ENCODE measurements at regions of chr10 and their contacts with region 1.

Region 1: DNA sequence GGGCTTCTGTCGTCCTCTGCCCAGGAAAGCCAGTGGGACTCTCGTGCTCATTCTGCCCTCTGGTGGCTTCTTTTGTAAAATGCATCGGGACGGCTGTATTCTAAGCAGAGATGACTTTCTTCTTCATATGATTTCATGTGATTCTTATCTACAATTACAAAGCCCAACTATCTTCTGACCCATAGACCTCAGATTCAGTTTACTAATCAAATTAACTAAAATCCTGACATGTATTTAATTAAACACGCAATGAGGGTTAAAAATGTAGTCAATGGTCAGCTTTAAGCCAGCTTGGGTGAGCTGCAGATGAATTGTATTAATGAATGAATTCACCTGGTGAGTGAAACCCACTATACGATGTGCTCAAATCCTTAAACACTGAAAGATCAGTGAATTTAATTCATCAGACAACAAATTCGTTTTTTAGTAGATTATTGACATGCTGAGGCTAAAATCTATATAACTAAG is 117.6 kb upstream of the FAM204A start:
- DNase-seq: no peak
- H3K4me3 ChIP-seq: no peak overlapping the region
- H3K27me3 ChIP-seq: no peaks in the 10 kb centered on the region
- CTCF ChIP-seq: peak; percentile 80

Region 2: GRCh38 chr10:118447478-118448270 is 12.1 kb before region 1 on chr10:
- CTCF ChIA-PET with region 1: interaction called, 20 read pairs
- POLR2A ChIA-PET with region 1: no interaction called
- DNase-seq: no peak
- H3K4me3 ChIP-seq: no peak overlapping the region
- H3K27me3 ChIP-seq: no peaks in the 10 kb centered on the region; the same call in 1 of the 2 replicates
- CTCF ChIP-seq: no peak

Region 3: DNA sequence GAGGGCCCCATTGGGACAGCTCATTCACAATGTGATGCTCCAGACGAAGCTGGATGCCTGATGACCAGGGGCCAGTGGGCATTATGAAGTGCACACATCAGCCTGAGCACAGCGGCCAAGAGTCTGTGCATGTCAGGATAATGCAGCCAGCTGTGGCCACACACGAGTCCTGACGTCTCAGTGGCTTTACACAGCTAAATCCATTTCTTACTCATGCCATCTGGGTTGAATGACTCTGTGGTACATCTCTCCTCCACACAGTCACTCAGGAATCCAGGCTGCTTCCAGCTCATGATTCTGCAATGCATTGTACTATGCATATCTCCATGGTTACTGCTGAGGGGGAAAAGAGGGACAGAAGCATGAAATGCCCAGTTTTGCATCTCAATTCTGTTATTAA is 12.1 kb after region 1 on chr10:
- CTCF ChIA-PET with region 1: interaction called, 34 read pairs
- POLR2A ChIA-PET with region 1: no interaction called
- DNase-seq: no peak
- H3K4me3 ChIP-seq: no peak overlapping the region
- H3K27me3 ChIP-seq: no peaks in the 10 kb centered on the region
- CTCF ChIP-seq: no peak

Region 4: GRCh38 chr10:118484152-118484871 is 24.6 kb after region 1 on chr10:
- CTCF ChIA-PET with region 1: no interaction called
- POLR2A ChIA-PET with region 1: no interaction called
- DNase-seq: no peak
- H3K4me3 ChIP-seq: no peak overlapping the region
- H3K27me3 ChIP-seq: no peaks in the 10 kb centered on the region
- CTCF ChIP-seq: no peak

Region 5: DNA sequence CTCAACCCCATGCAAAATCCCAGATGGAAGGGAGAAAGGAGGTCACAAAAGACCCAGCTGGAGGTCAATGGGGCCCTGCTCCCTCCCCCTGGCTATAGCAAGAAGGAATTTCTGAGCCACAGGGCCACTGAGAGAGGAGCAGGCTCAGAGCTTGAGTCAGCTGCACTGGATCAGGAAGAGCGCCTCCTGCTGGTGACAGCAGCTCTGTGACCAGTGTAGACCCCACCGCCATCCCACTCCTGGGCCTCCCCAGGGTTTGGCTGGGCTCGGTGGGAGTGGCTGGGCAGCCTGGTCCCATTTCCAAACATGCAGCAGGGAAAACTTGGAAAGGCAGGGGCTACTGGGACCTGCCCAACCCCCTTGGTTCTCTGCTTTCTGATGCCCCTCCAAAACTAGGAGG is 167.2 kb after region 1 on chr10:
- CTCF ChIA-PET with region 1: no interaction called
- POLR2A ChIA-PET with region 1: no interaction called
- DNase-seq: no peak
- H3K4me3 ChIP-seq: no peak overlapping the region
- H3K27me3 ChIP-seq: no peaks in the 10 kb centered on the region
- CTCF ChIP-seq: no peak